Adrenal gland (tissue), 19 donors: ENCODE measurements at regions of chr11 and their contacts with region 1.

Region 1: DNA sequence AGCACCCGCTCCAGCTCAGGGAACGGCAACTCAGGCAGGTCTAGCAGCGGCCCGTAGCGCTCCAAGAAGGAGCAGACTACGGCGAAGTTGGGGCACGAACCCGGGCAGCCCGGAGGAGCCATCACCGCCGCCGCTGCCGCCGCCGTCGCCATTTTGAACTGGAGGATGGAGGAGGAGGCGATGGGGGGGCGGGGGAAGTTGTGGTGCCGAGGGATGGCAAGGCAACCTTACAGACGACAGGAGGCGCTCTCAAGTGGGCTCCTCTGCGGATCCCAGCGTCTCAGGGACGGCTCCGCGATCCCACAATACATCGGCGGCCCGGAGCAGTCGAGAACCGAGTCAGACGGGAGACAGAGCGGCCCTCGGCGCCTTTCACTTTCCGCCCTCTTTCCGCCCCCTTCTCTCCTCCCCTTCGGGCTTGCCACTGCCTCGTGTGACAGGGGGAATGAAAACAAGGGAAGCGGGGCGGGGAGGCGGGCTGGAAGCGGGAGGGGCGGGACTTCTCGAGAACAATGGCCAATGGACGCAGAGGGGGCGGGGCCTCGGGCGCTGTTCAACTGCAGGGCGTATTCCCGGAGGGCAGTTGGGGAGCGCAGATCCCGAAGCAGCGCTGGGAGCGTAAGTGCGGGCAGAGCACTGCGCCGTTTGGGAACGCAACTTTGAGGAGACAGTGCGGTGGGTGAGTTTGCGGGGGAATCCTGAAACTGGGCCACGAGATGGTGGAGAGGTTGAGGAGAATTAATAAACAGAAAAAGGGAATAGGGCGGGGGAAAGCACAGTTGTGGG is at the starts of genes AAMDC and RSF1:
- DNase-seq: peak; percentile 99 to 100 (median 99)
- H3K4me3 ChIP-seq: peak within 1 kb of the TSS; percentile 85 to 99 (median 90)
- H3K27ac ChIP-seq: peak within 1 kb of the TSS; percentile 83 to 95 (median 89)
- H3K4me1 ChIP-seq: peaks cover 18 to 66% of the 10 kb centered on the region in 2 donors
- H3K27me3 ChIP-seq: no peaks in the 10 kb centered on the region
- CTCF ChIP-seq: peak; percentile 48 to 75 (median 65)
- POLR2A ChIP-seq: peak; percentile 58 to 94
- total RNA-seq, gene AAMDC: 85.6 to 339 (median 136) TPM
- total RNA-seq, gene RSF1: 39.6 to 108 (median 71.7) TPM

Region 2: GRCh38 chr11:77705195-77705876 is 115.4 kb before region 1 on chr11:
- intact Hi-C with region 1: no loop called
- DNase-seq: peak in 4 of 7 donors; percentile 25 to 44 (median 30)
- H3K4me3 ChIP-seq: no peak overlapping the region
- H3K27ac ChIP-seq: peak overlapping the region in 3 of 5 donors; percentile 8 to 61 (median 54)
- H3K4me1 ChIP-seq: peaks cover 12 to 25% of the 10 kb centered on the region in 2 donors
- H3K27me3 ChIP-seq: no peaks in the 10 kb centered on the region
- CTCF ChIP-seq: no peak
- POLR2A ChIP-seq: no peak

Region 3: DNA sequence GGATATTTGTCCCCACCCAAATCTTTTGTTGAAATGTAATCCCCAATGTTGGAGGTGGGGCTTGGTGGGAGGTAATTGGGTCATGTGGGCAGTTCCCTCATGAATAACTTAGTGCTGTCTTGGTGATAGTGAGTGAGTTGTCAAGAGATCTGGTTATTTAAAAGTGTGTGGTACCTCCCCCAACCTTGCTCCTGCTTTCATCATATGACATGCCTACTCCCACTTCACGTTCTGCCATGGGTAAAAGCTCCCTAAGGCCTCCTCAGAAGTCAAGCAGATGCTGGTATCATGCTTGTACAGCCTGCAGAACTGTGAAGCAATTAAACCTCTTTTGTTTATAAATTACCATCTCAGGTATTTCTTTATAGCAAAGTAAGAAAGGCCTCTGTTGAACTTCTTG is 30.7 kb after region 1 on chr11:
- intact Hi-C with region 1: no loop called
- DNase-seq: no peak
- H3K4me3 ChIP-seq: no peak overlapping the region
- H3K27ac ChIP-seq: peak overlapping the region in 1 of 5 donors; percentile 18
- H3K4me1 ChIP-seq: peaks cover 0 to 4% of the 10 kb centered on the region in 2 donors
- H3K27me3 ChIP-seq: no peaks in the 10 kb centered on the region
- CTCF ChIP-seq: no peak
- POLR2A ChIP-seq: no peak

Region 4: GRCh38 chr11:77994412-77995362 is 173.9 kb after region 1 on chr11 and contains the start of gene INTS4:
- intact Hi-C with region 1: loop called in 1 of 2 experiments (anchors 10 kb)
- DNase-seq: peak; percentile 98 to 100 (median 100)
- H3K4me3 ChIP-seq: peak within 1 kb of the TSS in 3 of 4 donors; percentile 35 to 78 (median 76)
- H3K27ac ChIP-seq: peak within 1 kb of the TSS; percentile 65 to 93 (median 81)
- H3K4me1 ChIP-seq: peaks cover 5 to 27% of the 10 kb centered on the region in 2 donors
- H3K27me3 ChIP-seq: no peaks in the 10 kb centered on the region
- CTCF ChIP-seq: peak in 2 of 6 experiments; percentile 10 to 25
- POLR2A ChIP-seq: peak; percentile 60 to 61
- total RNA-seq, gene INTS4: 17.8 to 69.6 (median 39.5) TPM

Region 5: GRCh38 chr11:78030429-78031325 is 209.9 kb after region 1 on chr11:
- intact Hi-C with region 1: no loop called
- DNase-seq: peak; percentile 70 to 85 (median 79)
- H3K4me3 ChIP-seq: no peak overlapping the region
- H3K27ac ChIP-seq: peak overlapping the region in 2 of 5 donors; percentile 28 to 36
- H3K4me1 ChIP-seq: peaks cover 22 to 23% of the 10 kb centered on the region in 2 donors
- H3K27me3 ChIP-seq: no peaks in the 10 kb centered on the region
- CTCF ChIP-seq: no peak
- POLR2A ChIP-seq: no peak